ENCODE measurements at regions of chr12 and their contacts with region 1.

Region 1: DNA sequence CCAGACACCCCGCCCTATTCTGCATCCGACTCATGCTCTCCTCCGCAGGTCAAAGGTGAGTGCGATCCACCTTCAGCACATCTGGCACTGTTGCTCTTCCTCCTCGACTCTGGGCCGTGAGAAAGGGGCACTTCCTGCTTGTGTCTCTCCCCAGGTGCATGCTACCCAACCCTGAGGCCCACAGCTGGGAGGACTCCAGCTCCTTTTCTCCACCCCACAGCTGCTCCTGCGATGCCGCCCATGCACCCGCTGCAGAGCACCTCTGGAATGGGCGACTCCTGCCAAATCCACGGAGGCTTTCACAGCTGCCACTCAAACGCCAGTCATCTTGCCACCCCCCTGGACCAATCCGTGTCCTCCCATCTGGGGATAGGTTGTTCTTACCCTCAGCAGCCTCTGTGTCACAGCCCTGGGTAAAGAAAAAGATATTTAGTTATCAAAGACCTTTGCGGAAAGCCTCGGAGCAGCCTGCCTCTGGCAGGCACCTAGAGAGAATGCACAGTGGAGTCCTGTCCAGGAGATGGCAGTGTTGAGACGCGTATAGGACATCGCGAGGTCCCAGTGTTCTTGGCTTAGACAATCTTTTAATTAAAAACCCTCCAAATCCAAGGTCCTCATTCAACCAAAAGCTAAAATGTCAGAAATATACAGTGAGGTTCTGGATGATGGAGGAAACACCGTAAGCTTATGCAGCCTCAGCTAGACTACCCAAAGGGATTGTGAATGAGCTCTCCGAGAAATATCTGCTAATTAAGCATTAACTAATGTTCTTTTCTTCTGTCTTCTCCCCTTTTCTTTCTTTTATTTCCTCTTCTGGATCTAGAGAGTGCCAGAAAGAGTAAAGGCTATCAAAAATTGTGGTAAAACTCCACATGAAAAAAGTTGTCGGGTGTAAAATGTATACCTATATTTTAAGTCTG is 54.3 kb downstream of the MYRFL start:
- DNase-seq: peak; percentile 61 to 76
- H3K4me3 ChIP-seq: peak overlapping the region in 1 of 2 donors; percentile 10
- H3K27ac ChIP-seq: no peak overlapping the region
- H3K4me1 ChIP-seq: peaks cover 0 to 7% (median 3%) of the 10 kb centered on the region in 4 donors
- H3K27me3 ChIP-seq: no peaks in the 10 kb centered on the region
- CTCF ChIP-seq: peak; percentile 86 to 91

Region 2: DNA sequence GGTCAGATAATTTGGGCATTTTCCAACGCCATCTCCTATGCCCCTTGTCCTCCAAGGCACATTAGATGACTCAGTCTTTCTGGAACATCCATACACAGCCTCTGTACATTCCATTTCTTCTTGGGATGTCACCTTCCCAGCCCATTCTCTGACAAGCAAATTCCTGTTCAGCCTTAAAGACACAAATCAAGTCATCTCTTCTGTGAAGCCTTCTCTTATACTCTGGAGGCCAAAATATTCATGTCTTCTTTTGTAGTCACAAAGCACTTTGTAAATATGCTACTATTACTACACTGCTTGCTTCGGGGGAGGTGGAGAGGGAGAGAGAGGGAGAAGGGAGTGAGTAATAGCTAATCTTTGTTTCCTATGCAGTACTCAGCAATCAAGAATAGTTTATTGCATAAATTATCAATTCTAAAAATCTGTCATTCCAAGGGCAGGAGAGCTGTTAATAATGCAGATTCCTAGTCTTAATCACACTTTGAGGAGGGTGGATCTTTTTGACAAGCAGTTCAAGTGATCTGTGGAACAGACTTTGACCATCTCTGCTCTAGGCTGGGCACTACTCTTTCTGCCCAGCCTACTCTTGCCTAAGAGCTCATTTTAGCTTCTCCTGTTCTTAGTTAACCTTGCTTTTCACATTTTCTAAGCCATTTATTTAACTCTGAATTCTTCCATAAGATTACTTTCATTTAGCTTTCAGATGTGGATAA is 514.6 kb after region 1 on chr12:
- intact Hi-C with region 1: loop called (anchors 10 kb)
- DNase-seq: no peak
- H3K4me3 ChIP-seq: no peak overlapping the region
- H3K27ac ChIP-seq: no peak overlapping the region
- H3K4me1 ChIP-seq: no peaks in the 10 kb centered on the region
- H3K27me3 ChIP-seq: no peaks in the 10 kb centered on the region
- CTCF ChIP-seq: no peak

Region 3: GRCh38 chr12:70576346-70577282 is 697.3 kb after region 1 on chr12:
- intact Hi-C with region 1: loop called (anchors 5 kb)
- DNase-seq: no peak
- H3K4me3 ChIP-seq: no peak overlapping the region
- H3K27ac ChIP-seq: no peak overlapping the region
- H3K4me1 ChIP-seq: no peaks in the 10 kb centered on the region
- H3K27me3 ChIP-seq: no peaks in the 10 kb centered on the region
- CTCF ChIP-seq: peak; percentile 75 to 85

Region 4: GRCh38 chr12:70719672-70720420 is 840.5 kb after region 1 on chr12:
- intact Hi-C with region 1: loop called (anchors 10 kb)
- DNase-seq: peak in 1 of 2 donors; percentile 32
- H3K4me3 ChIP-seq: peak overlapping the region; percentile 1 to 10
- H3K27ac ChIP-seq: no peak overlapping the region
- H3K4me1 ChIP-seq: no peaks in the 10 kb centered on the region
- H3K27me3 ChIP-seq: no peaks in the 10 kb centered on the region
- CTCF ChIP-seq: peak; percentile 74 to 79

Measured in tibial artery (tissue), 4 donors.